Activated T-helper 1 cell treated with anti-CD3 and anti-CD28 coated beads, Interleukin-12 subunit alpha, Interleukin-12 subunit beta, Interleukin-2, Interleukin-4 antibody, amounts not matched to agents 30 ng/mL and 10 ng/mL and 1 ng/mL, durations not matched to agents 14 hours and 24 hours and 36 hours (primary cell): ENCODE measurements at regions of chr7 and their contacts with region 1.

Region 1: GRCh38 chr7:154913638-154914312 is 89.1 kb downstream of the PAXIP1 start:
- DNase-seq: peak; percentile 75
- H3K4me3 Mint-ChIP-seq: peak overlapping the region; percentile 68
- H3K27ac Mint-ChIP-seq: no peak overlapping the region
- H3K4me1 Mint-ChIP-seq: peaks cover 4% of the 10 kb centered on the region
- H3K27me3 Mint-ChIP-seq: peaks cover 19% of the 10 kb centered on the region

Region 2: DNA sequence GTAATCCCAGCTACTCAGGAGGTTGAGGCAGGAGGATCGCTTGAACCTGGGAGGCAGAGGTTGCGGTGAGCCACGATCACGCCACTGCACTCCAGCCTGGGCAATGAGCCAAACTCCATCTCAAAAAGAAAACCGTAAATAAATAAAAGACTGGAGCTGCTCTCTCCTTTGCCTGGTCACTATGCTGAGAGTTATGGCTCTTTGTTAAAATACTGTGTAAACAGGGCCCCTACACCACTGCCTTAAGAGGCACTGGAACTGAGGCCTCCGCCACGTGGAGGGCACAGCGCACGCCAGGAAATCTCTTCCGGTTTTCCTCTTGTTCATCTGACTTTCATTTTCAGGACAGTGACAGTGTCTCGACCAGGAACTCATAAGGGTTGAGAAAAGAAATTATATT is 34.1 kb before region 1 on chr7:
- intact Hi-C with region 1: no loop called
- DNase-seq: no peak
- H3K4me3 Mint-ChIP-seq: no peak overlapping the region
- H3K27ac Mint-ChIP-seq: no peak overlapping the region
- H3K4me1 Mint-ChIP-seq: no peaks in the 10 kb centered on the region
- H3K27me3 Mint-ChIP-seq: no peaks in the 10 kb centered on the region

Region 3: GRCh38 chr7:154953006-154953684 is 39.4 kb after region 1 on chr7:
- intact Hi-C with region 1: loop called (anchors 1 kb)
- DNase-seq: no peak
- H3K4me3 Mint-ChIP-seq: no peak overlapping the region
- H3K27ac Mint-ChIP-seq: no peak overlapping the region
- H3K4me1 Mint-ChIP-seq: no peaks in the 10 kb centered on the region
- H3K27me3 Mint-ChIP-seq: no peaks in the 10 kb centered on the region

Region 4: DNA sequence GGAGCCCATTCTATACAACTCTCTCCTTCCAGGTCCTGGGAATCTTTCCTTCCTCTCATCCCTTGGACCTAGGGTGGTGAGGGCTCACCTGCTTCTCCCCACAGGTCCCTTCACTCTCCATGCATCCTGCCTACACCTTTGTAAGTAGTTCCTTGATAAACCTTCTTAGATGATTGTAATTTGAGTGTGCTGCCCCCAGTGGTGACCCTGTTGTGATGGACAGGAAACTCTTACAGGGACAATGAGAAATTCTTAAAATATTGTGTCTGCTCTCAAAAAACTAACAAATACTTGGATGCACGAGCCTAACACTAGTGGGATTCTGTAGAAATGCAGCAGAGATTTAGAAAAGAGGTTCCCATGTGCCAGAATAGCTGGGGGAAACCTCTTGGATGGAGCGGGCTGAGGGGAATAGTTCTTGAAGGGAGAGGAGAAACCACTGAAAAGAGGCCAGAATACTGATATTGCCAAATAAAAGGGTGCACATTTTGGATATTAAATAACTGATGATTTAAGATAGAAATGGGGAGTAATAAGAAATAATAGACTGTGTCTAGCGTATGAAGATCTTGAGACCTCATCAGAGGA is 95.9 kb after region 1 on chr7:
- intact Hi-C with region 1: loop called (anchors 5 kb)
- DNase-seq: no peak
- H3K4me3 Mint-ChIP-seq: no peak overlapping the region
- H3K27ac Mint-ChIP-seq: no peak overlapping the region
- H3K4me1 Mint-ChIP-seq: peaks cover 2% of the 10 kb centered on the region
- H3K27me3 Mint-ChIP-seq: peaks cover 9% of the 10 kb centered on the region

Region 5: DNA sequence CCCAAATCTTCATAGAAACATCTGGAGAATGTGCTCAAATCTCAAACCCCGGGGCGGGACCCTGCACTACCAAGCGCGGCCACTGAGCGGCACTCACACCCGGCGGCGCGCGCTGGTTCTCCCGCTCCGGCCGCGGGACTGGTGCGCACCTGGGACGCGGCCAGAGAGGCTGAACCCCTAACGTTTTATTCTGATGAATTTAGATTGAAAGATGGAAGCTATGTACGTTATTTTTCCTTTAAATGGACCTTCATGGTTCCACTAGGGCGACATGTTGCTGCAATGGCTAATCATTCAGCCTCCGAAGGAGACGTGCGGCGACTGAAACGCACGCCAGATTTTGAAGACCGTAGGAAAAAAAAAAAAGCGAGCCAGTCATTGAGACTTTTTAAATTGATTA is 276.9 kb after region 1 on chr7:
- intact Hi-C with region 1: no loop called
- DNase-seq: peak; percentile 44
- H3K4me3 Mint-ChIP-seq: no peak overlapping the region
- H3K27ac Mint-ChIP-seq: peak overlapping the region; percentile 55
- H3K4me1 Mint-ChIP-seq: peaks cover 17% of the 10 kb centered on the region
- H3K27me3 Mint-ChIP-seq: peaks cover 13% of the 10 kb centered on the region

Region 6: GRCh38 chr7:155230168-155230593 is 316.4 kb after region 1 on chr7:
- intact Hi-C with region 1: no loop called
- DNase-seq: no peak
- H3K4me3 Mint-ChIP-seq: no peak overlapping the region
- H3K27ac Mint-ChIP-seq: no peak overlapping the region
- H3K4me1 Mint-ChIP-seq: no peaks in the 10 kb centered on the region
- H3K27me3 Mint-ChIP-seq: peaks cover 5% of the 10 kb centered on the region